MCF 10A (cell line): ENCODE measurements at regions of chr5 and their contacts with region 1.

Region 1: GRCh38 chr5:146203011-146203871 is at the start of gene RBM27:
- DNase-seq: peak; percentile 100
- H3K4me3 Mint-ChIP-seq: no peak within 1 kb of the TSS
- H3K27ac Mint-ChIP-seq: no peak within 1 kb of the TSS
- H3K4me1 Mint-ChIP-seq: peaks cover 5% of the 10 kb centered on the region
- H3K27me3 Mint-ChIP-seq: no peaks in the 10 kb centered on the region
- CTCF ChIP-seq: no peak
- total RNA-seq, gene RBM27: 25.6 and 27.9 TPM in 2 replicates

Region 2: DNA sequence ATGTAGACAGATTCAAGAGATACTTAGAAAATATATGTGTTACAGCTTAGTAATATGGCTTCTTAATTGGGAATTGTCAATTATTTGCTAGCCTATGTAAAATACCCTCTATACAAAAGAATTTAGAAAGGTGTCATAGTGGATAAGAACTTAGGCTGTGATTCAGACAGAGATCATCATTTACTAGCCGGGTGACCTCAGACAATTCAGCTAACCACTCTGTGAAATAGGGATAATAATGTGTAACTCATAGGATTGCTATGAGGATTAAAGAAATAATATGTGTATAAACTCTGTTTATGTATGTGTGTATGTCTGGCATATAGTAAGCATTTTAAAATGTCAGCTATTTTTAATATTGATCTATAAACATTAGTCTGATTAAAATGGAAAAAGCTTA is 14.9 kb before region 1 on chr5:
- CTCF ChIA-PET with region 1: interaction called, 8 read pairs
- POLR2A ChIA-PET with region 1: interaction called, 33 read pairs
- intact Hi-C with region 1: no loop called
- DNase-seq: no peak
- H3K4me3 Mint-ChIP-seq: no peak overlapping the region
- H3K27ac Mint-ChIP-seq: no peak overlapping the region
- H3K4me1 Mint-ChIP-seq: peaks cover 12% of the 10 kb centered on the region
- H3K27me3 Mint-ChIP-seq: no peaks in the 10 kb centered on the region
- CTCF ChIP-seq: no peak

Region 3: DNA sequence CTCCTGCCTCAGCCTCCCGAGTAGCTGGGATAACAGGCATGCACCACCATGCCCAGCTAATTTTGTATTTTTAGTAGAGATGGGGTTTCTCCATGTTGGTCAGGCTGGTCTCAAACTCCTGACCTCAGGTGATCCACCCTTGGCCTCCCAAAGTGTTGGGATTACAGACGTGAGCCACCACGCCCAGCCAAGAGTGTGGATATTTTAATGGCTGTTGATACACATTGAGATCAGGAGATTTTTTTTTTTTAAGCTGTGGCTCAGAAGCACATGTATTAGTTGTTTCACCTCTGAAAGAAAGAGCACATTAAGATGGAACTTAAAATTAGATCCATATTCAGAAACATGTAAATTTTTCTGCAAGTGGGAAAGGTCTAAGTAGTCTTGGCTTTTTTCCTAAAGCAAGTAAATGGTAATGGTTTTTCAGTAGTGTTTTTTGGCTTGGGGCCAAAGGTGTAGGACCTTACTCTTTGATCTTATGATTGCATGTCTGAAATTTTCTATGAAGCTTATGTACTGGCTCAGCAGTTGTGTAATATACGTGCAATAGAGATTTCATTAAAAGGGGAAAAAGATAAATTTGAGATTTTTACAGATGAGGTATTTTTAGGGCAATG is 10.1 kb after region 1 on chr5:
- CTCF ChIA-PET with region 1: no interaction called
- POLR2A ChIA-PET with region 1: interaction called, 24 read pairs
- intact Hi-C with region 1: no loop called
- DNase-seq: peak; percentile 81
- H3K4me3 Mint-ChIP-seq: no peak overlapping the region
- H3K27ac Mint-ChIP-seq: no peak overlapping the region
- H3K4me1 Mint-ChIP-seq: peaks cover 23% of the 10 kb centered on the region
- H3K27me3 Mint-ChIP-seq: no peaks in the 10 kb centered on the region
- CTCF ChIP-seq: no peak

Region 4: GRCh38 chr5:146221234-146221633 is 18.0 kb after region 1 on chr5:
- CTCF ChIA-PET with region 1: interaction called, 3 read pairs
- POLR2A ChIA-PET with region 1: interaction called, 12 read pairs
- intact Hi-C with region 1: no loop called
- DNase-seq: no peak
- H3K4me3 Mint-ChIP-seq: no peak overlapping the region
- H3K27ac Mint-ChIP-seq: no peak overlapping the region
- H3K4me1 Mint-ChIP-seq: no peaks in the 10 kb centered on the region
- H3K27me3 Mint-ChIP-seq: no peaks in the 10 kb centered on the region
- CTCF ChIP-seq: no peak

Region 5: DNA sequence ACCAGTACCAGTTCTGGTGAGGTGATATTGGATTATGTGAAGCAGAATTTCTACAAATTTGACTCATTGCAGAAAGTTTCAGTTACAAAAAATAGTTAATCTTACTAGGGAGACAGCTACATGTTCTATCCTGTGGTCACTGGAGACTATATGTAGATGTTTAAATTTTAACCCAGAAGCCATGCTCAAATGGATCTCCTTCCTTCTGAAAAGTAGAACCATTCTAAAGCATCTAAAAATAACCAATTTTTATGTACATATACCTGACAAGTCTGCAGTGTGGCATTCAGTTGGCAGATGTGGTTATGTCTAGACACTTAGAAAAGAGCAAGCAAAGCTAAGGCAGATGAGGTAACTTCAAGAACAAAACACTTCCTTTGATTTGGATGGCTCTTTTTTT is 69.9 kb after region 1 on chr5:
- CTCF ChIA-PET with region 1: no interaction called
- POLR2A ChIA-PET with region 1: no interaction called
- intact Hi-C with region 1: no loop called
- DNase-seq: no peak
- H3K4me3 Mint-ChIP-seq: no peak overlapping the region
- H3K27ac Mint-ChIP-seq: no peak overlapping the region
- H3K4me1 Mint-ChIP-seq: no peaks in the 10 kb centered on the region
- H3K27me3 Mint-ChIP-seq: no peaks in the 10 kb centered on the region
- CTCF ChIP-seq: no peak